MCF 10A (cell line): ENCODE measurements at regions of chr12 and their contacts with region 1.

Region 1: DNA sequence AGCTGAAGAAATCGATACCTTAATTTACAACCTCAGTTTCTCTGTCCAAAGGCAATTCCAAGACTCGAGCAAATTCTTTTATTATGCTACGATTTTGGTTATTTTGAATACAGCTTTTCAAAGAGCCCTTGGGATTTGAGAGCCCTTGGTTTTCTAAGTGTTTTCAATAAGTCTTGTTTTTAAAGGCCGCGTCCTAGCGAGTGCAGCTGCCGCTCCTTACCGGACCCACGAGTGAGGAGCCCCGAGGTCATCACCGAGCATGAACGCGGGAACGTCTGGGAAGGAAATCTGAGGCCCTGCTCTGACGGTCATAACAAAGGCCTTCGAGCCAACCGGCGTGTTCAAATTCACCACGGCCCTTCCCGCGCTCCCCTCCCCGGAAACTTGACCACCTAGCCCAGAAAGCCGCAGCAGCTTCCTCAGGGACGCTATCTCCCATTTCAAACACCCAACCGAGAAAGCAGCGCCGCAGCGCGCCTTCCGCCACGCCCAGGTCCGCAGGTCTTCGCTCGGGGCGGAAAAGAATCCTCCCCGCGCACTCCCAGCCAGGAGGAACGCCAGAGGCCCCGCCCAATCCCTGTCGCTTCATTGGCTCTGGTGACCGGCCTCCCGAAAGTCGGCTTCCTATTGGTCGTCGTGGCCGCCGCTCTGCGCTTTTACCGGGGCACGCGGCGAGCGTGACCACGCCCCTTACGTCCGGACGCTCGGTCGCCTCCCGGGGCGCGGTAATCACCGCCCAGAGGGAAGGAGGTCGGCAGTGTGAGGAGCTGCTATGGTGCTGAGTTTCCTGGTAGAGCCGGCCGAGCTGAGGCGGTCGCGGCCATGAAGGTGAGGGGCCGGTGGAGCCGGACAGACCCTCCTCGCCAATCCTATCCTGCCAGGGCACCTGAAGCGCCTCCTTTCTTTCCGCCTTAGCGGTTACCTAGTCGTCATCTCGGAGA is at the start of gene RNF34:
- DNase-seq: peak; percentile 99
- H3K4me3 Mint-ChIP-seq: peak within 1 kb of the TSS; percentile 90
- H3K27ac Mint-ChIP-seq: peak within 1 kb of the TSS; percentile 59
- H3K4me1 Mint-ChIP-seq: peaks cover 14% of the 10 kb centered on the region
- H3K27me3 Mint-ChIP-seq: no peaks in the 10 kb centered on the region
- CTCF ChIP-seq: no peak
- total RNA-seq, gene RNF34: 40.5 and 40.9 TPM in 2 replicates

Region 2: DNA sequence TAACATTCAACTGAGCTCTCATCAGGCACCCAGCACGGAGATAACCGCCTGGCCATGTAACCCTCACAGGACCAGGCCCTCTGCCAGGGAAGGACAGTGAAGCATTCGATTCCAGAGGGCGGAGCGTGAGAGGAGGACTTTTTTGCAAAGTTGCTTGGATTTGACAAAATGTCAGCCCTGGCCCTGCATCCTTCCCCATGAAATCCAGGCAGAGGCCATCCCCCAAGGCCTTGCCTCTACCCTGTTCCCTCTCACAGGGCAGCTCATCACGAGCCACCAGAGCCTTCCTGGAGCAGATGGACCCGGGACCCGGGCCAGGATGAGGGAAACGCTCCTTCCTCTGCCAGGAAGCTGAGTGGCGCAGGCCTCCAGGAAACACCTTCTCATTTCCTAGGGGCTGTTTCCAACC is 120.2 kb before region 1 on chr12:
- CTCF ChIA-PET with region 1: no interaction called
- POLR2A ChIA-PET with region 1: interaction called, 3 read pairs
- intact Hi-C with region 1: loop called (anchors 5 kb)
- DNase-seq: no peak
- H3K4me3 Mint-ChIP-seq: no peak overlapping the region
- H3K27ac Mint-ChIP-seq: no peak overlapping the region
- H3K4me1 Mint-ChIP-seq: peaks cover 4% of the 10 kb centered on the region
- H3K27me3 Mint-ChIP-seq: no peaks in the 10 kb centered on the region
- CTCF ChIP-seq: no peak

Region 3: DNA sequence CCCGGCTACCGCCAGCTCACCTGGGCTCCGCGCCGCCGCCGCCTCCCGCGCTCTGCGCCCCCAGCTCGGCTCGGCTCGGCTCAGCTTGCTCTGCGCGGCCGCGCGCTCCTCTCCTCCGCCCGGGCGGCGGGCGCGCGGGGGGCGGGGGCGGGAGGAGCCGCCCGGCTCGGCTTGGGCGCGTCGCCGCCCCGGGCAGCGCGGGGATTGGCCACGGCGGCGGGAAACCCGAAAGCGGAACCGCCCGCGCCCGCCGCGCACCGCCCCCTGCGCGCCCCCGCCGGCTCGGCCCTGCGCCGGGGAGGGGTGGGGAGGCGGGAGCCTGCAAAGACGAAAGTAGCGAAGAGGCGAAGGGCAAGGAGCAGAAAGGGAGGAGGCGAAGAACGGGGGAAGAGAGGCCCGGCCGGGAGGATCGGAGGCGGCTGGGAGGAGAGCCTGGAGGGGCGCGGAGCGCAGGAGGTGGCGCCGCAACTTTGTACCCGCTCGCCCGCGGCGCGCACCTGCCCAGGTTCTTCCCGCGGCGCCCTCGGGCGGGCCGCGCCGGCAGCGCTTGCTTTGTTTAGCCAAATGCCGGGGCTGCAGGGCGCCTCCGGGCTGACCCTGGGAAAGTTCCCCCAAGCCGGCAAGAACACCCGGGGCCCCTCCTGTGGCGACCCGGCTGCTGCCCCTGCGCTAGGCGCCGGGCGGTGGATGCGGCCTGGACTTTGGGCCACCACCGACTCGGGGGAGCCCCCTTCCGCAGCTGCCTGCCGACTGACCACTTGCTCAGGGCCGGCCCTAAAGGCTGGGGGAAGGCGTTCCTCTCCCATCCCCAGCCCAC is 102.8 kb before region 1 on chr12 and contains the start of gene CAMKK2:
- CTCF ChIA-PET with region 1: no interaction called
- POLR2A ChIA-PET with region 1: interaction called, 11 read pairs
- intact Hi-C with region 1: no loop called
- DNase-seq: peak; percentile 82
- H3K4me3 Mint-ChIP-seq: peak within 1 kb of the TSS; percentile 78
- H3K27ac Mint-ChIP-seq: peak within 1 kb of the TSS; percentile 49
- H3K4me1 Mint-ChIP-seq: peaks cover 11% of the 10 kb centered on the region
- H3K27me3 Mint-ChIP-seq: no peaks in the 10 kb centered on the region
- CTCF ChIP-seq: peak; percentile 26
- total RNA-seq, gene CAMKK2: 31.9 and 36.3 TPM in 2 replicates

Region 4: GRCh38 chr12:121334513-121335343 is 64.9 kb before region 1 on chr12:
- CTCF ChIA-PET with region 1: interaction called, 22 read pairs
- POLR2A ChIA-PET with region 1: interaction called, 34 read pairs
- intact Hi-C with region 1: no loop called
- DNase-seq: peak; percentile 66
- H3K4me3 Mint-ChIP-seq: no peak overlapping the region
- H3K27ac Mint-ChIP-seq: no peak overlapping the region
- H3K4me1 Mint-ChIP-seq: no peaks in the 10 kb centered on the region
- H3K27me3 Mint-ChIP-seq: no peaks in the 10 kb centered on the region
- CTCF ChIP-seq: peak; percentile 67

Region 5: DNA sequence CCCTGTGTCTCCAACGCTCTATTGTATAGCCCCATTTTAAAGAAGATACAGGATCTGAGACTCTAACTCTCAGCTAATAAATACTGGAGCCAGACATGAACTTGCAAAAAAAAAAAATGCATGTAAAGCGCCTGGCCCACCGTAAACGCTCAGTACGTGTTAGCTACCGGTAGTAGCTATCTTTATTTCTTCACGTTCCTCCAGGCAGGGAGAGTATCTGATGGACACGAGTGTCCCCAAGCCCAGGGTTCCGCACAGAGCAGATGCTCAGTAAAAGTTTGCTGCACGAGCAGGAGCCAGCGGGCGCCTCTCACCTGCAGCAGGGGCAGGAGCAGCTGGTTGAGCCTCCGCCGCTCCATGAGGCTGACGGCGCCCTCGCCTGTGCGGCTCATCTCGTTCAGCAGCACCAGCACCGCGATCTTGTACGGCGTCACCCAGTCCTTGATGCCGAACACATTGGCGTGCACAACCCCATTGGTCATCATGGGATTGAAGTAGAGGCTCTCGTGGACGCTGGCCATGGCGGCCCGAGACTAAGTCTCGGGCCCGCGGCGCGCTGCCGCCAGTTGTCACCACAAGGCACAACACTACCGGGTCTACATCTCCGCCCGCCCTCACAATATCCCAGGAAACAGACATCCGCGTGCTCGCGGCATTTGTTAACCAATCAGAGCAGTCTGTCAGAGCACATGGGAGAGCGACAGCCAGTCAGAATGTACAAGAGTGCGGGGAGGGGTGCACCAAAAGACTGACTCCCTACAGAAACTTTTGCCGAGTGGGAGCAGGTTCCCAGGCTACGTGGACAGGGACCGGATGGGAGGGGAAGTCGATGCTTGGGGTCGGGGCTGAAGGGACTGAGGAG is 47.6 kb before region 1 on chr12 and contains the start of gene ANAPC5:
- CTCF ChIA-PET with region 1: interaction called, 10 read pairs
- POLR2A ChIA-PET with region 1: interaction called, 119 read pairs
- intact Hi-C with region 1: loop called (anchors 2 kb)
- DNase-seq: peak; percentile 99
- H3K4me3 Mint-ChIP-seq: peak within 1 kb of the TSS; percentile 86
- H3K27ac Mint-ChIP-seq: peak within 1 kb of the TSS; percentile 97
- H3K4me1 Mint-ChIP-seq: peaks cover 14% of the 10 kb centered on the region
- H3K27me3 Mint-ChIP-seq: no peaks in the 10 kb centered on the region
- CTCF ChIP-seq: no peak
- total RNA-seq, gene ANAPC5: 85.9 and 95.6 TPM in 2 replicates

Region 6: GRCh38 chr12:121413917-121414316 is 14.3 kb after region 1 on chr12:
- CTCF ChIA-PET with region 1: no interaction called
- POLR2A ChIA-PET with region 1: interaction called, 10 read pairs
- intact Hi-C with region 1: no loop called
- DNase-seq: no peak
- H3K4me3 Mint-ChIP-seq: no peak overlapping the region
- H3K27ac Mint-ChIP-seq: no peak overlapping the region
- H3K4me1 Mint-ChIP-seq: no peaks in the 10 kb centered on the region
- H3K27me3 Mint-ChIP-seq: no peaks in the 10 kb centered on the region
- CTCF ChIP-seq: no peak

Region 7: GRCh38 chr12:121423682-121424623 is 24.3 kb after region 1 on chr12:
- CTCF ChIA-PET with region 1: interaction called, 3 read pairs
- POLR2A ChIA-PET with region 1: interaction called, 26 read pairs
- intact Hi-C with region 1: no loop called
- DNase-seq: no peak
- H3K4me3 Mint-ChIP-seq: no peak overlapping the region
- H3K27ac Mint-ChIP-seq: no peak overlapping the region
- H3K4me1 Mint-ChIP-seq: no peaks in the 10 kb centered on the region
- H3K27me3 Mint-ChIP-seq: no peaks in the 10 kb centered on the region
- CTCF ChIP-seq: no peak